ENCODE measurements at regions of chr3 and their contacts with region 1.

Region 1: DNA sequence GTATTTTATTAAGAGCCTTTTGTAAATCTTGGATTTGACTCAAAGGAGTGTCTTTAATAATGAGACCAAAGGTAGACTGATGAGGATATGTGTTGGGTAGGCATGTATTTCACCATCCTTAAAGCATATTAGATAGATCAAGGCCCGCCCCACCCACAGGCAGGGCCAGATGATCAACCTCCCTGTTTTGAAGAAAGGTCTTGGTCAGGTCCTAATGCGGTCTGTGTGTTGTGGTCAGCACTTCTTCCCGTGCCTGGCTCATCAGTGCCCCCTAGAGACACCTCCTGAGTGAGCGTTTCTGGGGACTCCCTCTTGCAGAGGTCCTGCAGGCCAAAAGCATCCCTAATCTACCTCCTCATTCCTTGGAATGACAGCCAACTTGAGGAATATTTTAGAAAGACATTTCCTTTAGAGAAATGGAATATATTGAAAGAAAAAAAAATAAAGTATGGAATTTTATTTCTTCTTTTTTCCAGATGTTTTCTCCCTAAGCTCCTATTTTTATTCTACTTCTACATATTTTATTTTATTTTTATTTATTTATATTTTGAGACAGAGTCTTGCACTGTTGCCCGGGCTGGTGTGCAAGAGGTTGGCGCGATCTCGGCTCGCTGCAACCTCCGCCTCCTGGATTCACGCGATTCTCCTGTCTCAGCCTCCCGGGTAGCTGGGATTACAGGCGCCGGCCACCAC is 6.0 kb downstream of the TM4SF4 start:
- DNase-seq: peak; percentile 39 to 83 (median 77)
- ATAC-seq: peak; percentile 99
- H3K4me3 ChIP-seq: no peak overlapping the region
- H3K27ac ChIP-seq: peak overlapping the region; percentile 33 to 67
- H3K4me1 ChIP-seq: peaks cover 0 to 27% of the 10 kb centered on the region in 2 donors
- H3K27me3 ChIP-seq: no peaks in the 10 kb centered on the region
- CTCF ChIP-seq: peak; percentile 79 to 91

Region 2: DNA sequence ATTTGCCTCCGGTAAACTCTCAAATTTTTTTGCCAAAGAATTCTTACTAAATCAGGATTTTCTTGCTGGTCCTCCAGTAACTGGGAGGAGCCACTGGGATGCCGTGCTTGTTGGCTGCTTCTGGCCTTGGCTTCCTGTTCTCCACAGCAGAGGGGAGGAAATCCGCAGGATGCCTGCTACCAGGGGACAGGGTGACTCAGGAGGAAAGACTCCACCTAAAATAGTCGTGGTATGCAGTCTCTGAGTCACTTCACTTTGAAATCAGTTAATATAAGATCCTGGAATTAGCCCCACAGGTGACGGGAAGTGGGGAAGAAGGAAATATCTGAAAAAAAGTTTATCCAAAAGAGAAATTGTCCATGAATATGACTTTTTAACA is 140.6 kb before region 1 on chr3:
- intact Hi-C with region 1: no loop called
- DNase-seq: peak in 3 of 4 donors; percentile 51 to 80 (median 78)
- ATAC-seq: peak; percentile 97
- H3K4me3 ChIP-seq: no peak overlapping the region
- H3K27ac ChIP-seq: peak overlapping the region; percentile 83 to 86
- H3K4me1 ChIP-seq: peaks cover 6 to 42% of the 10 kb centered on the region in 2 donors
- H3K27me3 ChIP-seq: no peaks in the 10 kb centered on the region
- CTCF ChIP-seq: no peak

Region 3: GRCh38 chr3:149352556-149352955 is 127.9 kb before region 1 on chr3:
- intact Hi-C with region 1: loop called in 1 of 2 experiments (anchors 10 kb)
- DNase-seq: peak in 3 of 4 donors; percentile 28 to 83 (median 63)
- ATAC-seq: peak; percentile 94
- H3K4me3 ChIP-seq: no peak overlapping the region
- H3K27ac ChIP-seq: peak overlapping the region in 1 of 2 donors; percentile 19
- H3K4me1 ChIP-seq: no peaks in the 10 kb centered on the region
- H3K27me3 ChIP-seq: no peaks in the 10 kb centered on the region
- CTCF ChIP-seq: peak; percentile 53 to 78

Region 4: GRCh38 chr3:149393345-149394160 is 86.9 kb before region 1 on chr3:
- intact Hi-C with region 1: loop called in 1 of 2 experiments (anchors 5 kb)
- DNase-seq: peak in 3 of 4 donors; percentile 63 to 80 (median 79)
- ATAC-seq: peak; percentile 93
- H3K4me3 ChIP-seq: no peak overlapping the region
- H3K27ac ChIP-seq: peak overlapping the region in 1 of 2 donors; percentile 24
- H3K4me1 ChIP-seq: peaks cover 6 to 30% of the 10 kb centered on the region in 2 donors
- H3K27me3 ChIP-seq: no peaks in the 10 kb centered on the region
- CTCF ChIP-seq: peak; percentile 78 to 79

Region 5: GRCh38 chr3:149414557-149415231 is 65.8 kb before region 1 on chr3:
- intact Hi-C with region 1: no loop called
- DNase-seq: no peak
- ATAC-seq: peak; percentile 94
- H3K4me3 ChIP-seq: no peak overlapping the region
- H3K27ac ChIP-seq: peak overlapping the region; percentile 53 to 81
- H3K4me1 ChIP-seq: peaks cover 16 to 17% of the 10 kb centered on the region in 2 donors
- H3K27me3 ChIP-seq: no peaks in the 10 kb centered on the region
- CTCF ChIP-seq: no peak